Mammary epithelial cell (primary cell): ENCODE measurements at regions of chr9 and their contacts with region 1.

Region 1: DNA sequence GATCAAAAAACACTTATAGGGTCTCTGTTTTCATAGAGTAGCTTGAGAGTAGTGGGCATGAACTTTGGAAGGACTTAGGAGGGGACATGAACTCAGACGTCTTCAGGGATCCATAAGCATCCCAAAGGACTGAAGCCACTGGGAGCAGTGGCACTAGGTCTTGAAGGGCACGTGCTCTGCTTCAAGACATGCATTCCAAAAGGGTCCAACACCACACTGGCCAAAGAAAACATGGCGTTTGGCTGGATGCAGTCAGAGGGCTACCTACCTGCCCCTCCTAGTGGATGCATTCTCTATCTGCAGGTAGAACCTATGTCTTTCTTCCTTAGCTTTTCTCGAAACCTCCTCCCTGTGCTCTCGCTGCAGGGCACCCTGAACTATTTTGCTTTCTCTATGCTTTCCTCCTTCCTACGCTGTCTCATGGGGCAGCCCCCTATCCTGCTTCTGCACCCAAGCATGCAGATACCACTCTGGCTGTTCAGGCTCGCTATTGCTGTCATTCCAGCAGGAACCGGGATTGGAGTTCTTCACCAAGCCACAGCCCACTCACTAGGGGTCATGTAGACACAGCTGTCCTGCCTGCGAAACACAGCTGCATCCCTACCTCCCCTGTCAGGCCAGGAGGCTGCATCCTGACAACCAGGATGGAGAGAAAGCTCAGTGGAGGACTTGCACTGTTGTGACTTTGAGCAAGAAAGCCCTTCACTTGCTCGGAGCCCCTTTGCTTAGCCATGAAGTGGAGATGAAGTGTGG is 11.9 kb downstream of the FAM240B start:
- DNase-seq: no peak
- H3K4me3 ChIP-seq: no peak overlapping the region
- H3K27ac ChIP-seq: no peak overlapping the region
- H3K4me1 ChIP-seq: no peaks in the 10 kb centered on the region
- H3K27me3 ChIP-seq: no peaks in the 10 kb centered on the region
- CTCF ChIP-seq: peak; percentile 41 to 46

Region 2: GRCh38 chr9:38651400-38652042 is 56.5 kb before region 1 on chr9:
- CTCF ChIA-PET with region 1: no interaction called
- dilution Hi-C with region 1: no loop called
- in situ Hi-C with region 1: no loop called
- intact Hi-C with region 1: loop called (anchors 10 kb)
- DNase-seq: no peak
- H3K4me3 ChIP-seq: no peak overlapping the region
- H3K27ac ChIP-seq: no peak overlapping the region
- H3K4me1 ChIP-seq: no peaks in the 10 kb centered on the region
- H3K27me3 ChIP-seq: no peaks in the 10 kb centered on the region
- CTCF ChIP-seq: no peak